ENCODE measurements at regions of chr15 and their contacts with region 1.

Region 1: DNA sequence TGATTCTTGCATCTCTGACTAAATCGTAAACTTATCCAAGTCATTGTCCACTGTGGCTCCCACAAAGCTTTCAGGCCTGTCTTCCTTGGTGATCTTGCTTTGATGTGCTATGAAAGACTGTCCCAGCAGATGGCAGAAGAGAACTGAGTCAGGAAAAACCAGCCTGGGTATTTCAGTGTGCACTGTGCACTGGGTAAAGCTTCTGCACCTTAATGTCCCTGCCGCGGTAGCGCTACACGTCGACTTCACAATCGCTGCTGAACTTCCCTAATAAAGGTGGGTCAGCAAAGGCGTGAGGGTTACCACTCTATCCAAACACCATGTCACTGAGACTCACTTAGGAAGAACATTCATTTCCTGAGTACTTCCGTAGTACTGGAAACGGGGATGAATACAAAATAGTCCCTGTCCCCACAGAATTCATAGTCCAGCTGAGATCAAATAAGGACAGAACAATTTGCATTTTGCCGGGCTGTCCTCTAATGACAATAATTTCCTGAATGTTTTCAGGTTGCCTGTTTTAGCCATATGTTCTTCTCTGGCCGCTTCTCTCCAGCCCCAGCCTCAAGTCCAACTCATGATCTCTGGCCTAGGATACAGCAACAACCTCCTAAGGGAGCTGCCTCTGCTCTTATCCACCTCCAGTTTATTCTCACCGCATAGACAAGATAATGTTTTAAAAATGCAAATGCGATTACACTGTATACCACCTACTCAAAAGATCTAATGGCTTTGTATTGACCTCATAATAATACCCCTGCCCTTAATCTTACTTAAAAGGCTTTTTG is 83.6 kb upstream of the AKAP13 start:
- DNase-seq: peak; percentile 55 to 67
- H3K4me3 ChIP-seq: peak overlapping the region; percentile 18; the same call in 1 of the 2 replicates
- H3K27ac ChIP-seq: no peak overlapping the region
- H3K4me1 ChIP-seq: 0 out of 2 replicates have a peak, but pooled peaks cover 5% of the 10 kb centered on the region
- H3K27me3 ChIP-seq: no peaks in the 10 kb centered on the region
- CTCF ChIP-seq: peak; percentile 83

Region 2: DNA sequence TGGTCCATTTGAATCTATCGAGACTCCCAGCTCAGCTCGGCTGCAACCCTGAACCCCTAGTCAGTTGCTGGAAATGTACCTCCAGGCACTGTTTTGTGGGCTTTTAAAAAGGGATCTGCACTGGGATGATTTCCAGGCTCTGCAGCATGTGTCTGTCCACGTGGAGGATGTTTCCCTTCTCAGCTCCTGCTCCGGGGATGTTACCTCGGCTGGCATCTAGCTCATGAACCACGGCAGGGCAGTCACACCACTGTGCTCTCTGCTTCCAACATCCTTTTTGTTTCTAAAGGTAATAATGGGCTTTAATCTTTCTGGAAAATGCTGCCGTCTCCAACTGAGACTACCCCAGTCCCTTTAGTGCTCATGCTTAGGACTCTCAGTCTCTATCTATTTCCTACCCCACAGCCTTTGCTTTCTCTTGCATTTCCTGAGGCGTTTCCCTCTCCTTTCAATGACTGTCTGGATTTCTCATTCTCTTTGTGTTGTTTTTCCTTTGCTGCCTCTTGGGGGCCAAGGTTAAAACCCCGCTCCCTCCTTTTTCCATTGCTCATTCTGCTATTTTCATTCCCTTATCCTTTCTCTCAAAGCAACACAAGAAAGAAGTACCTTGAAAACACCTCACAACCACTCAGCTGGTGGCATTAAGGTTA is 40.7 kb after region 1 on chr15:
- CTCF ChIA-PET with region 1: interaction called, 11 read pairs
- POLR2A ChIA-PET with region 1: no interaction called
- intact Hi-C with region 1: no loop called
- DNase-seq: no peak
- H3K4me3 ChIP-seq: no peak overlapping the region
- H3K27ac ChIP-seq: no peak overlapping the region
- H3K4me1 ChIP-seq: 0 out of 2 replicates have a peak, but pooled peaks cover 5% of the 10 kb centered on the region
- H3K27me3 ChIP-seq: no peaks in the 10 kb centered on the region
- CTCF ChIP-seq: no peak

Region 3: GRCh38 chr15:85504749-85505676 is 208.2 kb after region 1 on chr15:
- CTCF ChIA-PET with region 1: interaction called, 5 read pairs
- POLR2A ChIA-PET with region 1: no interaction called
- intact Hi-C with region 1: loop called (anchors 1 kb)
- DNase-seq: peak; percentile 11 to 38
- H3K4me3 ChIP-seq: no peak overlapping the region
- H3K27ac ChIP-seq: no peak overlapping the region
- H3K4me1 ChIP-seq: no peaks in the 10 kb centered on the region
- H3K27me3 ChIP-seq: no peaks in the 10 kb centered on the region
- CTCF ChIP-seq: peak; percentile 70

Region 4: GRCh38 chr15:85730001-85730820 is 433.4 kb after region 1 on chr15:
- CTCF ChIA-PET with region 1: no interaction called
- POLR2A ChIA-PET with region 1: no interaction called
- intact Hi-C with region 1: loop called (anchors 10 kb)
- DNase-seq: peak in 1 of 2 experiments; percentile 29
- H3K4me3 ChIP-seq: no peak overlapping the region
- H3K27ac ChIP-seq: no peak overlapping the region
- H3K4me1 ChIP-seq: no peaks in the 10 kb centered on the region
- H3K27me3 ChIP-seq: no peaks in the 10 kb centered on the region
- CTCF ChIP-seq: peak; percentile 84